Lower leg skin (tissue), 4 donors: ENCODE measurements at regions of chr6 and their contacts with region 1.

Region 1: GRCh38 chr6:137165375-137166246 is 7.8 kb downstream of the IL22RA2 start:
- DNase-seq: no peak
- H3K4me3 ChIP-seq: no peak overlapping the region
- CTCF ChIP-seq: no peak
- POLR2A ChIP-seq: no peak

Region 2: DNA sequence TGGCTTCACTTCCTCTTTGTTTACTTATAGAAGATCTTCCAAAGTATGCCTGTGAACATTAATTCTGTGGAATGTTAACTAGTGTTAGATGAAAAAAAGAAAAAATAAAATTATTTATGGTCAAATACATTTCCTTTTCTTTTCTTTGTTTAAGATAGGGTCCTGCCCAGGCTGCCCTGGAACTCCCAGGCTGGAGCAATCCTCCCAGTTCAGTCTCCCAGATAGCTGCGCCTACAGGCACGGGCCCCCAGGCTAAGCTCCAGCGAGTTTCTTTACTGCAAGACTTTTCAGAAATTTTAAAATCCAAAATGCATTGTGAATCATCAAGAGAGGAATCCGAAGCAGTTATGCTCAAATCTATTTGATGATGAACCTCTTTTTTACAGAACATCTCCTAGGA is 81.5 kb before region 1 on chr6:
- intact Hi-C with region 1: no loop called
- DNase-seq: no peak
- H3K4me3 ChIP-seq: no peak overlapping the region
- CTCF ChIP-seq: no peak
- POLR2A ChIP-seq: no peak

Region 3: DNA sequence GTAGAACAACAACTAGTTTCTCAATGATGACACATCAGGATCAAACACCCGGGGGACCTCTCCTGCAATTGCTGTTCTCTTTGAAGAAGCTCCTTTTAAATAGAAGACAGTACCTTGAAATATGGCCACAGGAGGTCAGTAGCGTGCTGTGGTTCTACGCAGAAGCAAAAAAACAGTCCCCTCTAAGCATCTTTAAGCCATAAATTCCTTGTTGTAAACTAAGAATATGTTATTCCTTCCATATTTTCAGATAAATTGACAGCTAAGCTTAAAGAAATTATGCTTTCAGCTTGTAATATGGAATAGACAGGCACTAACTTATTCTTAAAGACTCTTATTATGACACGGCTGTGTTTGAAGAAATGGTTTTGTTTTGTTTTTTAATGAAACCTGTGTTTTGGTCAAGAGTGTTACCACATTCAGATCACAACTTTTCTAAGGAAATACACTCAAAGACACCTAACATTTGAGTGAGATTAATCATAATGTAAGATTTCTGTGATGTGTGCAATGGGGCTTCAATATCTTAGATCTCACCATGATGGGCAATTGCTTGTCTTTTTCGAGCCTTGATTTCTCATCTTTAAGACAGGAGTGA is 71.1 kb before region 1 on chr6:
- intact Hi-C with region 1: loop called (anchors 10 kb)
- DNase-seq: peak; percentile 81 to 88
- H3K4me3 ChIP-seq: no peak overlapping the region
- CTCF ChIP-seq: peak in 1 of 3 donors; percentile 65
- POLR2A ChIP-seq: no peak

Region 4: DNA sequence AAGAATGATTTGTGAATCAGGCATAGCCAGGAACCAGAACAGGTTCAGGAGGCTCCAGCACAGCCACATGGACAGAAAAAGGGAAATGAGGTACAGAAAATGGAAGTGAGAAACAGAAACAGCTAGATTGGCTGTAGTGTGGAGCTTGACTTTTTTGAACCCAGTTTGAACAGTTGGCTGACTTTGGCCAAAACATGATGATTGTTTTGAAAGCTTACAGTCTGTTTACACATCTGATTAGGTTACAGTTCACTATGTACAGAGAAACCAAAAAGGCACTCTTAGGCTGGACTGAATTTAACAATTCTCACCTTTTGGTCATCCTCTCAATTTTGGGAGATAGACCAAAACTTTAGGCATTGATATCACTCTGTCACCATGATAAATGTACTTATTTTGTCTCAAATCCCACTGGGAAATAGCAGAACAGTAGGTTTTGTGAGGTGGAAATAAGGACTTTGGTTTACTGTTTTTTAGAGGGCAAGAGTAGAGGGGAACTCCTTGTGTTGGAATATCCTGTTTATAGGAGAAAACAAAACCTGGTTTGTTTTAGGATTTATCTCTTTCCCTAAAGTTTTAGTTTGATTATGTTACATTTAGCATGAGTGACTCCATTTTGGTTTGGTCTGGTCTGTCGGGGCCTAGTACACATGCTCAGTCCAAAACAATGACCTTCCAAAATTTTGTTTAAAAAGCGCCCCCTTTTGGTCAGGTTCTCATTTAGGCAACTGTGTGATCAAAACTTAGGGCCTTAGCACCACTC is 205.4 kb after region 1 on chr6:
- intact Hi-C with region 1: no loop called
- DNase-seq: no peak
- H3K4me3 ChIP-seq: no peak overlapping the region
- CTCF ChIP-seq: no peak
- POLR2A ChIP-seq: no peak

Region 5: GRCh38 chr6:138211027-138211581 is 1045.5 kb after region 1 on chr6:
- intact Hi-C with region 1: no loop called
- DNase-seq: no peak
- H3K4me3 ChIP-seq: no peak overlapping the region
- CTCF ChIP-seq: no peak
- POLR2A ChIP-seq: no peak